AG04450 (cell line): ENCODE measurements at regions of chr12 and their contacts with region 1.

Region 1: DNA sequence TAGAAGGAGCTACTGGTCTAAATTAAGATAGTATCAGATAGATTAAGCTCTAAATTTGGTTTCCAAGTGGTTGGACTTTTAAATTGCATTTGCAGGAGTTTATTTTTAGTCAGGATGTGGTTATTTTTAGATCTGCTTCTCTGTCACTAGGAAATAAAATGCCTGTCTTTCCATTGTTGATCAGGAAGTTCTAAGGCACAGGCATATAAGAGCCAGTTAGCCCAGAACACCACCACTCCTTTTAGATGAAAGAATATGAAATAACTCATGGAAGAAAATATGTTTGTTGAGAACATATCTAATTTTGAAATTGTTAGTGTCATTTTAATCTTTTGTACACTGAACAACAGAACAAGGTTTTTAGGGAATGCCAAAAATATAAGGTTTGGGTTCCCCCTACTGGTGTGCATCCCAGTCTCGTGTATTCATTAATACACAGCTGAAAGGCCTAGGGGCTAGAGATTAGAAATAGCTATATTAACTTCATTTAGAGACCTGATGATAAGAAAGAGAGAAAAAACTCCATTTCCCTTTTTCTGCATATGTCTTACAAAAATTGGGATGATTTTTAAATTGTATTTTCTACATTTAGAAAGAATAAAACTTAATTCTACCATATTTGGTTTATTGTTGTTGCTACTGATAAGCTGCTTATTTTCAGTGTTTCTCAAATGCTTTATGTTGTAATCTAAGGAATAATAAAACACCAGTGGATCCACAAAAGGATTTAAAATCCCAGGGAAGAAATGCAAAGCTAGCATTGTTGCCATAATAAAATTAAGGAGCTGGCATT is 67.2 kb downstream of the RIC8B start:
- DNase-seq: no peak
- H3K4me3 ChIP-seq: no peak overlapping the region
- H3K27ac ChIP-seq: no peak overlapping the region
- H3K27me3 ChIP-seq: no peaks in the 10 kb centered on the region
- CTCF ChIP-seq: peak; percentile 71

Region 2: DNA sequence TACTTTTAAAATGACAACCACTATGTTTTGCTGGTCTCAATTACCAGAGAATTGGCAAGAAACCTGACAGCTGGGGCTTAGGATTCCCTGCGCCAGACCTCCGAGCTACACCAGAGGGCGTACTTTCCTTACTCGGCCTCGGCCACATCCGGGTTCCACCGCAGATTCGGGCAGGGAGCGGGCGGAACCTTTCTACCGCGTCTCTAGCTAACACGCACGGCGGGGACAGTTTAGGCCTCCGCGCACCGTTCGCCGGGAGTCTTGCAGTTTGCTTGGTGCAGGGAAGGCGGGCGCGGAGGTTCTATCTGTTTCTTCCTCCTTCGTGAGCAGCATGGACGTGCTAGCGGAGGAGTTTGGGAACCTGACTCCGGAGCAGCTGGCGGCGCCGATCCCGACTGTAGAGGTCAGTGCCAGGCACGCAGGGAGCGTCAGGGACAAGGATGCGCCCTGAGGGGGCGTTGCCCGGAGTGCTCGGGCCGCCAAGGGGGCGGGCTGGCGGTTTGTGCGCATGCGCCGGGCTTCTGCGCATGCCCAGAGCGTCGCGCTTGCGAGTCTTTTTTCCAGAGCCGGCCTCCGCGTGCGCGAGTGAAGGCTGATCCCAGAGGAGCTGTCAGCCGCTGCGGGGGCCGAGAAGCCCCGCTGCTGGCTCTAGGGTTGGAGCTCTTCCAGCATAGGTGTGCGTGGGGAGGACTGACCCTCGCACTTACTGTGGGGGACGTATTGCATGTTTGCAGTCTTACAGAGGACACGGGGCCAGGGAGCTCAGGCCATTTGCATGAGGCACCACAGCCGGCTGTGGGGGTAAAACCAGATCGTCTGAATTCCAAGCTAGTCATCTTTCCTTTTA is 483.9 kb before region 1 on chr12 and contains the start of gene POLR3B:
- CTCF ChIA-PET with region 1: interaction called, 42 read pairs
- POLR2A ChIA-PET with region 1: interaction called, 4 read pairs
- DNase-seq: peak; percentile 92
- H3K4me3 ChIP-seq: peak within 1 kb of the TSS; percentile 92
- H3K27ac ChIP-seq: peak within 1 kb of the TSS; percentile 97
- H3K27me3 ChIP-seq: peaks cover 2% of the 10 kb centered on the region
- CTCF ChIP-seq: peak; percentile 95
- polyA plus RNA-seq, gene POLR3B: 11.0 and 14.1 TPM in 2 replicates

Region 3: GRCh38 chr12:106378788-106379187 is 462.9 kb before region 1 on chr12:
- CTCF ChIA-PET with region 1: interaction called, 16 read pairs
- POLR2A ChIA-PET with region 1: no interaction called
- DNase-seq: no peak
- H3K4me3 ChIP-seq: no peak overlapping the region
- H3K27ac ChIP-seq: no peak overlapping the region
- H3K27me3 ChIP-seq: no peaks in the 10 kb centered on the region
- CTCF ChIP-seq: no peak

Region 4: GRCh38 chr12:106386813-106387535 is 454.7 kb before region 1 on chr12:
- CTCF ChIA-PET with region 1: interaction called, 31 read pairs
- POLR2A ChIA-PET with region 1: interaction called, 6 read pairs
- DNase-seq: peak; percentile 24
- H3K4me3 ChIP-seq: no peak overlapping the region
- H3K27ac ChIP-seq: no peak overlapping the region
- H3K27me3 ChIP-seq: no peaks in the 10 kb centered on the region
- CTCF ChIP-seq: no peak

Region 5: DNA sequence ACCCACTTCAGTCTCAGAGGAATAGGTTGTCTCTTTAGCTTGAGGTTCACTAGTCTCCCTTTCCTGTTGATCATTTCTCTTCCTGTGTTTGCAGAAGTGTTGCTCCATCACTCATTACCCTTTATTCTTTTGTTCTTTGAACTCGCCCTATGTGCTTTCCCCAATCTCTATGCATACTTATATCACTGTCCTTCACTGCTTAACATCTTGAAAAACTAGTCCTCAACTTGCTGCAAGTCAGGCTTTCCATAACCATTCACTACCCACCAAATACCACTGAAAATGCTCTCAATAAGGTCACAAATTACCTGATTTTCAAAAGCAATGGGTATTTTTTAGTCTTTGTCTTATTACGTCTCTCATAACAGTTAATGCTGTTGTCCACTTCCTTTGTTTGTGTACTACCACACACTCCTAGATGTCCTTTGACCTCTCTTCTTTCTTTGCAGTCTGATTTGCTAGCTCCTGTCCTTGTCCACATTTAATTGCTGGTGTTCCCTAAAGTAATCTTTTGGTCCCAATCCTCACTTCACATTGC is 13.6 kb after region 1 on chr12:
- CTCF ChIA-PET with region 1: interaction called, 23 read pairs
- POLR2A ChIA-PET with region 1: no interaction called
- DNase-seq: no peak
- H3K4me3 ChIP-seq: no peak overlapping the region
- H3K27ac ChIP-seq: no peak overlapping the region
- H3K27me3 ChIP-seq: no peaks in the 10 kb centered on the region
- CTCF ChIP-seq: no peak

Region 6: GRCh38 chr12:106871496-106871895 is 29.8 kb after region 1 on chr12:
- CTCF ChIA-PET with region 1: interaction called, 16 read pairs
- POLR2A ChIA-PET with region 1: no interaction called
- DNase-seq: no peak
- H3K4me3 ChIP-seq: no peak overlapping the region
- H3K27ac ChIP-seq: no peak overlapping the region
- H3K27me3 ChIP-seq: no peaks in the 10 kb centered on the region
- CTCF ChIP-seq: no peak

Region 7: GRCh38 chr12:106919910-106920544 is 78.3 kb after region 1 on chr12:
- CTCF ChIA-PET with region 1: interaction called, 19 read pairs
- POLR2A ChIA-PET with region 1: no interaction called
- DNase-seq: peak; percentile 16
- H3K4me3 ChIP-seq: no peak overlapping the region
- H3K27ac ChIP-seq: no peak overlapping the region
- H3K27me3 ChIP-seq: peaks cover 7% of the 10 kb centered on the region
- CTCF ChIP-seq: peak; percentile 68

Region 8: DNA sequence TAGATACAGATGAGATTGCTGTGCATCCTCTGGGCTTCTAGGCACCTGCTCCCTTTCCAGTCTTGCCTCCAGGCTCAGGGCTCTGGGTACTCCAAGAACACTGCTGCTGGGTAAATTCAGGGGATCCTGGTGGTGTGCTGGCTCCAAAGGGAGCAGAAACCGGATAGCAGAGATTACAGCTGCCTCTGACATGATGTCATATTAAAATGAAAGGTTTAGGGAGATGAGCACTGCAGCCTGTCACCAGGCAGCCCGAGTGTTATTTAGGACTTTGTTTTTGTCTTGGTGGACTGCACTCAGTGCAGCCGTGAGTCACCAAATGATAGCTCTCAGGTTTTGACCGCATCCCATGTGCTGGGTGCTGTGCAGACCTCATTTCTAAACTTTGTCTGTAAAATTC is 517.6 kb after region 1 on chr12:
- CTCF ChIA-PET with region 1: no interaction called
- POLR2A ChIA-PET with region 1: no interaction called
- DNase-seq: peak; percentile 33
- H3K4me3 ChIP-seq: no peak overlapping the region
- H3K27ac ChIP-seq: no peak overlapping the region
- H3K27me3 ChIP-seq: no peaks in the 10 kb centered on the region
- CTCF ChIP-seq: no peak